Ascending aorta (tissue), 2 donors: ENCODE measurements at regions of chr2 and their contacts with region 1.

Region 1: DNA sequence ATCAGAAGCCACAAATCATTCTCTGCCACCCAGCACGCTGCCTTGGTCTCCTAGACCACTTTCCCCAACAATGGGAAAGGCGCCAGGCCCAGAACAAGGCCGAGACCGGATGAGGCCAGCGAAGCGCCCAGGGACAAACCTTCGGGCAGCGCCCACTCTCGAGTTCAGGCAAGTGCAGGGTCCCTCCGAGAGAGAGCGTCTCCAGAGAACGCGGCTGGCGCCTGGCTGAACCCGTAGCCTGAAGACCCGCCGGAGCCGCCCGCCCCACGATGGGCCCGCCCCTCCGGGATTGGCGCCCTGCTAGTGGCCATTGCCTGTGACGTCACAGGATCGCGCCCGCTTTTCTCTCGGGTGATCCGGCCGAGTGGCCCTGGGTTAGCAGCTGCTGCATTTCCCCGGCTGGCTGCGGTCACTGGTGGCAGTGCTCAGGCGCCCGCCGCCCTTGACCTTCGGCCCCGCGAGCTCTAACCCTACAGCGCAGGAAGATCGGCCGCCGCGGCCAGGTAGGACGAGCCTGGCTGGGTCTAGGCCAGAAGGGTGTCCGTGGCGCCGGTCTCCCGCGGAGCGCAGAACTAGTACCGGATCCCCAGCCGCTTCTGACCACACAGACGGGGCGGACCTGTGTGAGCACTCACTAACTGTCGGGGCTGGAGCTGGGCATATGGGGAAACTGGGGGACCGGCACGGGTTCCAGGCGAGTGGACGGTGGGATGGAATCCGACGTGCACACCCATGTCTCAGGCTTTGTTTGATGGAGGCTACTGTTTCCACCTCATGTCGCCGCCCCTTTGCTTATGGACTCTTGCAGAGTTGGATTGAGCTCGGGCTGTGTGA is at the start of gene FAHD2A:
- DNase-seq: peak; percentile 83 to 98
- H3K4me3 ChIP-seq: peak within 1 kb of the TSS; percentile 81 to 94
- H3K27ac ChIP-seq: peak within 1 kb of the TSS; percentile 68 to 86
- H3K4me1 ChIP-seq: peaks cover 0 to 7% of the 10 kb centered on the region in 2 donors
- H3K27me3 ChIP-seq: no peaks in the 10 kb centered on the region
- CTCF ChIP-seq: no peak
- total RNA-seq, gene FAHD2A: 54.0 TPM

Region 2: GRCh38 chr2:95284886-95285541 is 117.6 kb before region 1 on chr2:
- intact Hi-C with region 1: no loop called
- DNase-seq: no peak
- H3K4me3 ChIP-seq: no peak overlapping the region
- H3K27ac ChIP-seq: no peak overlapping the region
- H3K4me1 ChIP-seq: no peaks in the 10 kb centered on the region
- H3K27me3 ChIP-seq: no peaks in the 10 kb centered on the region
- CTCF ChIP-seq: no peak

Region 3: GRCh38 chr2:95345566-95346230 is 56.9 kb before region 1 on chr2:
- intact Hi-C with region 1: loop called (anchors 1 kb)
- DNase-seq: peak in 1 of 2 donors; percentile 90
- H3K4me3 ChIP-seq: peak overlapping the region; percentile 86 to 88
- H3K27ac ChIP-seq: peak overlapping the region; percentile 57 to 78
- H3K4me1 ChIP-seq: peaks cover 5 to 14% of the 10 kb centered on the region in 2 donors
- H3K27me3 ChIP-seq: no peaks in the 10 kb centered on the region
- CTCF ChIP-seq: peak; percentile 72 to 92 (median 91)